Lower leg skin (tissue), 4 donors: ENCODE measurements at regions of chr3 and their contacts with region 1.

Region 1: GRCh38 chr3:128075516-128076482 is 23.6 kb downstream of the SEC61A1 start:
- DNase-seq: peak; percentile 78 to 97
- H3K4me3 ChIP-seq: peak overlapping the region; percentile 22
- CTCF ChIP-seq: peak in 1 of 3 donors; percentile 33
- POLR2A ChIP-seq: no peak

Region 2: DNA sequence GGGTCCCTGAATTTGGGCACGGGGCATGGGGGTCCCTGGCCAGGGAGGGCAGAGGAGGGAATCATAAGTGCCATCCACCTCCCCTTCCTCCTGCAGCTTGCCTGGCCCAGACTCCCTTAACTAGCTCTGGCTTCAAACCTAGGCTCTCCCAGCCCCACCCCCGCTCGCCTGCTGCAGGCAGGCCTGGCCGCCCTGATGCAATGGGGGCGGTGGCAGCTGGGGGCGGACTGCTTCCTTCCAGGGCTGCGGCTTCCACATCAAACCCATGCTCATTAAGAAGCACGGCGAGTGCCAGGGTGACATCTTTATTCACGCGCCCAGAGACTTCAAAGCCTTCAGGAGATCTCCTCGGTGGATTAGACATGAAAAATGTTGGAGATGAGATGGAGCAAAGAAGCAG is 608.4 kb before region 1 on chr3:
- intact Hi-C with region 1: no loop called
- DNase-seq: no peak
- H3K4me3 ChIP-seq: no peak overlapping the region
- CTCF ChIP-seq: no peak
- POLR2A ChIP-seq: no peak

Region 3: GRCh38 chr3:128497387-128498126 is 421.8 kb after region 1 on chr3:
- intact Hi-C with region 1: loop called (anchors 10 kb)
- DNase-seq: peak; percentile 49 to 92
- H3K4me3 ChIP-seq: peak overlapping the region; percentile 10
- CTCF ChIP-seq: no peak
- POLR2A ChIP-seq: no peak

Region 4: GRCh38 chr3:128603811-128604775 is 528.3 kb after region 1 on chr3:
- intact Hi-C with region 1: loop called (anchors 10 kb)
- DNase-seq: no peak
- H3K4me3 ChIP-seq: no peak overlapping the region
- CTCF ChIP-seq: no peak
- POLR2A ChIP-seq: no peak